A549 (cell line): ENCODE measurements at regions of chr3 and their contacts with region 1.

Region 1: DNA sequence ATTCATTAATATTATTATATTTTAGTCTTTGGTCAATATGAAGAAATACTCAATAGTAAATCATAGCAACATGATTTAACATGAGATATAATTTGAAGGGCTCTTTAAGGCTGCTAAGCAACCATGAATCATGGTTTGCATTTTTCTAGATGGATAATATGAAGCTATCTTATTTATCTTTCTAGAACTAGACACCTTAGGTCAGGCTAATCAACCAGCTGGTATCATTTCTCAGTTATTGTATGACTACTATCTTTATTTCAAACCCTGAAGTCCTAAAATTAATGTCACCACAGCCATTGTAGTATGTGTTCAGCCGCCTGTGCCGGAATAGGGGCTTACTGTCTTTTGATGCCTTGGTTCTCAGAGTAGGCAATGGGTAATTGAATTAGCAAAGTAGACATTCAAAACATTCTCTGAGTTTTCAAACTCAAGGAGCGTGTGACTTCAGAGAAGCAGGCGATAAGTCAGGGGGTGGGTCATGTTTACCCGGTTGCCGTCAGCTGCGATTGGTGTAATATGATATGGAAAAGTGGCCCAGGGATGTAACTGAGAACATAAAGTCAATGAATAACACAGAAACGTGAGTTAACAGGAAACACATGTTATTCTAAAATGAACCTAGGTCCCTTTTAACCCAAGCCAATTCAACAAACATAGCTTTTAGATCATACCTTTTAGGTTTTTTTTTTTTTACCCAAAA is 93.4 kb upstream of the CTDSPL start:
- DNase-seq: peak in 1 of 2 experiments; percentile 11
- ATAC-seq: no peak
- H3K4me3 ChIP-seq: no peak overlapping the region
- H3K27ac ChIP-seq: no peak overlapping the region
- H3K4me1 ChIP-seq: no peaks in the 10 kb centered on the region
- CTCF ChIP-seq: no peak
- EP300 ChIP-seq: no peak
- POLR2A ChIP-seq: no peak
- RAD21 ChIP-seq: no peak

Region 2: DNA sequence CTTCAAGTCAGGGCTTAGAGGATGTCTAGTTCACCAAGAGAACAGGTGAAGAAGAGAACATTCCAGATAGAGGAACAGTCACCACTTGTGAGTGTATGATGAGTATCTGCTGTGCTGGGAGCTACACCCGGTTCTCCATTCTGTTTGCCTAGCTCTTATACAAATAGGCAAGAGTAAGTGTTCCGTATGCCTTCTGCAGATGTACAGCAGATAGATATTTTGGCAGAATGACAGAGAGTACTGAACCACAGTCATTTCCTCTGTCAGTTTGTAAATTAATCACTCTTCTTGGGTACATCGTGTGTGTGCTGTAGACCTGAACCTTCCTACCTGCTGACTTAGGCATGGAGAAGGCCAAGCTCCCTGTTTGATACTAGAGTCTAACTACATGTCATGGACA is 14.8 kb before region 1 on chr3:
- CTCF ChIA-PET with region 1: no interaction called
- POLR2A ChIA-PET with region 1: no interaction called
- DNase-seq: no peak
- ATAC-seq: no peak
- H3K4me3 ChIP-seq: no peak overlapping the region
- H3K27ac ChIP-seq: no peak overlapping the region
- H3K4me1 ChIP-seq: no peaks in the 10 kb centered on the region
- CTCF ChIP-seq: no peak
- EP300 ChIP-seq: no peak
- POLR2A ChIP-seq: no peak
- RAD21 ChIP-seq: no peak

Region 3: DNA sequence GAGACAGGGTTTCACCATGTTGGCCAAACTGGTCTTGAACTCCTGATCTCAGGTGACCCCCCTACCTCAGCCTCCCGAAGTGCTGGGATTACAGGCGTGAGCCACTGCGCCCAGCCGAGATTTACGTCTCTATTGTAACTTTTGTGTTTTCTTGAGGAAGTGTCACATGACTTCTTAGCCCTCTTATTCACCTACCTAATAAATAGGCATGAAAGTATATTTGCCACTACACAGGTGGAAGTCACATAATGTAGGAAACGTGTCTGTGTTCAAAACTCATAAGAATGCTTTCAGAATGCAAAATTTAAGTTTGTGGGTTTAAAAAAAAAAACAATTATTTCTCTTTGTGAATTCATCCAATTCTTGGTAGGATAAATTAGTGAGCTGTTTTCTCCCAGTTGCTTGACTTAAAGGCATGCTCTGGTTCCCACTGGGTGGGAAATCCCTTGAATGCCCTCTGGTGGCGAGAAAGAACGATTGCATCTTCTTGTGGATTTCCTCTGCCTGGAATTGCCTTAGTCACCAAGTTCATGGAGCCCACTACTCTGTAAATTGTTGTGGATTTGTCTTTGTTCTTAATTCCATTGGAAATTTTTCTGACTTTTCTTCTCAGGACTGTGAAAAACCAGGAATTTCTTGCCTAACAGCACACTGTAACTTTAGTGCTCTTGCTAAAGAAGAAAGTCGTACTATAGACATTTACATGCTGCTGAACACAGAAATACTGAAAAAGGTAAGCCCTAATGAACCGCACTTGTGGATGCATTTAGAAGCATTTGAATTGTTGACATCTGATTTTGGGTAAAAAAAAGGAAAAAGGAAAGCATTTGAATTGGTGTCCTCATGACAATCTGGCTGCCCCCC is 11.3 kb after region 1 on chr3:
- CTCF ChIA-PET with region 1: interaction called, 10 read pairs
- POLR2A ChIA-PET with region 1: no interaction called
- DNase-seq: peak; percentile 84 to 85
- ATAC-seq: peak; percentile 93 to 97
- H3K4me3 ChIP-seq: no peak overlapping the region
- H3K27ac ChIP-seq: no peak overlapping the region
- H3K4me1 ChIP-seq: no peaks in the 10 kb centered on the region
- CTCF ChIP-seq: peak; percentile 85
- EP300 ChIP-seq: no peak
- POLR2A ChIP-seq: no peak
- RAD21 ChIP-seq: peak; percentile 77 to 79

Region 4: GRCh38 chr3:37892927-37893600 is 124.8 kb after region 1 on chr3:
- CTCF ChIA-PET with region 1: no interaction called
- POLR2A ChIA-PET with region 1: no interaction called
- DNase-seq: no peak
- ATAC-seq: peak; percentile 42 to 50; a peak in 1 of 6 replicates
- H3K4me3 ChIP-seq: no peak overlapping the region
- H3K27ac ChIP-seq: no peak overlapping the region
- H3K4me1 ChIP-seq: peaks cover 12% of the 10 kb centered on the region
- CTCF ChIP-seq: no peak
- EP300 ChIP-seq: no peak
- POLR2A ChIP-seq: no peak
- RAD21 ChIP-seq: no peak